ENCODE measurements at regions of chr3 and their contacts with region 1.

Region 1: GRCh38 chr3:58463181-58463941 is 28.5 kb upstream of the KCTD6 start:
- DNase-seq: peak; percentile 74
- H3K4me3 Mint-ChIP-seq: no peak overlapping the region
- H3K27ac Mint-ChIP-seq: no peak overlapping the region
- H3K4me1 Mint-ChIP-seq: peaks cover 8% of the 10 kb centered on the region
- H3K27me3 Mint-ChIP-seq: no peaks in the 10 kb centered on the region

Region 2: GRCh38 chr3:58349792-58350626 is 113.4 kb before region 1 on chr3:
- CTCF ChIA-PET with region 1: no interaction called
- DNase-seq: no peak
- H3K4me3 Mint-ChIP-seq: no peak overlapping the region
- H3K27ac Mint-ChIP-seq: peak overlapping the region; percentile 45
- H3K4me1 Mint-ChIP-seq: peaks cover 65% of the 10 kb centered on the region
- H3K27me3 Mint-ChIP-seq: no peaks in the 10 kb centered on the region

Region 3: DNA sequence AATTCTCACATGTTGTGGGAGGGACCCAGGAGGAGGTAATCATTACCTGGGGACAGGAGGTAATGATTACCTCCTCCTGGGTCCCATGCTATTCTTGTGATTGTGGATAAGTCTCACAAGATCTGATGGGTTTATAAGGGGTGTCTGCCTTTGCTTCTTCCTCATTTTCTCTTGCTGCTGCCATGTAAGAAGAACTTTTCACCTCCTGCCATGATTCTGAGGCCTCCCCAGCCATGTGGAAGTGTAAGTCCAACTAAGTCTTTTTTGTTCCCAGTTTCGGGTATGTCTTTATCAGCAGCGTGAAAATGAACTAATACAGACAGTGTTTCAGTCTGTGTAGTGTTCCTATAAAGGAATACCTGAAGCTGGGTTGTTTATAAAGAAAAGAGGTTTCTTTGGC is 15.4 kb after region 1 on chr3:
- CTCF ChIA-PET with region 1: interaction called, 10 read pairs
- DNase-seq: no peak
- H3K4me3 Mint-ChIP-seq: no peak overlapping the region
- H3K27ac Mint-ChIP-seq: no peak overlapping the region
- H3K4me1 Mint-ChIP-seq: peaks cover 16% of the 10 kb centered on the region
- H3K27me3 Mint-ChIP-seq: peaks cover 24% of the 10 kb centered on the region

Region 4: GRCh38 chr3:58491506-58492402 is 28.4 kb after region 1 on chr3 and contains the start of gene KCTD6:
- CTCF ChIA-PET with region 1: interaction called, 10 read pairs
- DNase-seq: peak; percentile 87
- H3K4me3 Mint-ChIP-seq: peak within 1 kb of the TSS; percentile 82
- H3K27ac Mint-ChIP-seq: peak within 1 kb of the TSS; percentile 73
- H3K4me1 Mint-ChIP-seq: peaks cover 30% of the 10 kb centered on the region
- H3K27me3 Mint-ChIP-seq: peaks cover 44% of the 10 kb centered on the region

Region 5: DNA sequence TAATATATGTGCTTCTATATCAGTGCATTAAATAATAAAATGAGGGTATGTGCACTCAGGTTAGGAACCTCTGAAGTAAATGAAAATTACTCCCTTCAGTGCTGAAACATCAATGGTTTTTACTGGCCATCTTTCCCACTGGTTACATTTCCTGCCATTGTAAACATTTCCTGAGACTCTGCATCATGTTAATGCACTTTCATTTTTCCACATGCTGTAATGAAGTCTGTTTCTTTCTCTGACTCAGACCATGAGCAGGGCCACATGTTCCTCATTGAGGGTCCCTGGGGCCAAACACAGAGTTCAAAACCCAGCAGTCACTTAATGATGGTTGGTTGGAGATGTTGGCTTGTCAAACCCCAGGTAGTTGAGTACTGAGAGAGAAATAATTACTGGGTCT is 187.9 kb after region 1 on chr3:
- CTCF ChIA-PET with region 1: no interaction called
- DNase-seq: no peak
- H3K4me3 Mint-ChIP-seq: no peak overlapping the region
- H3K27ac Mint-ChIP-seq: no peak overlapping the region
- H3K4me1 Mint-ChIP-seq: no peaks in the 10 kb centered on the region
- H3K27me3 Mint-ChIP-seq: peaks cover 4% of the 10 kb centered on the region